GM13976 (cell line): ENCODE measurements at regions of chr10 and their contacts with region 1.

Region 1: DNA sequence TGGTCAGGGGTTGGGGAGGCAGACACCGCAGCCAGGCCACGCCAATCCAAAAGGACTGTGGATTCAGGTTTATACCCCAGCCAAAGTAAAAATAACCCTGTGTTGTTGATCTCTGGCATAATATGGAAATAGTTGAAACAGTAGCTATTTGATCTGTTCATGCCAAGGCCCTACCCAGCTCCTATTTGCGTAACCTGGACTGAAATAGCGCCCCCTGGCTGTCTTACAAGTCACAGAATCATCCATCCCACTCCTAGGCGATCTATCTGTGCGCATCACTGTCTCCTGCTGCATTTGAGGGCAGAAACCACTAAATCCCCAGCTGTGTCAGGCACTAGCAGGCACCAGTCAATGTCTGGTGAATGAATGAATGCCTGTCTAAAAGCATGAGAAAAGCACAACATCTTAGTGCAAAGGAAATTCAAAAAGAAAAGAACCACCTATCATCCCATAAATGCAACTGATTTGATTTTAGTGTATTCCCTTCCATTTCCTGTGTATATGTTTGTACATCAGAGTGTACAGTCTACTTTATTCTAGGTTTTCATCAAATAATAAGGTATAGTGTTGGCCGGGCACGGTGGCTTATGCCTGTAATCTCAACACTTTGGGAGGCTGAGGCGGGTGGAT is 160.0 kb downstream of the SLIT1 start:
- DNase-seq: peak; percentile 70
- CTCF ChIP-seq: peak; percentile 63

Region 2: DNA sequence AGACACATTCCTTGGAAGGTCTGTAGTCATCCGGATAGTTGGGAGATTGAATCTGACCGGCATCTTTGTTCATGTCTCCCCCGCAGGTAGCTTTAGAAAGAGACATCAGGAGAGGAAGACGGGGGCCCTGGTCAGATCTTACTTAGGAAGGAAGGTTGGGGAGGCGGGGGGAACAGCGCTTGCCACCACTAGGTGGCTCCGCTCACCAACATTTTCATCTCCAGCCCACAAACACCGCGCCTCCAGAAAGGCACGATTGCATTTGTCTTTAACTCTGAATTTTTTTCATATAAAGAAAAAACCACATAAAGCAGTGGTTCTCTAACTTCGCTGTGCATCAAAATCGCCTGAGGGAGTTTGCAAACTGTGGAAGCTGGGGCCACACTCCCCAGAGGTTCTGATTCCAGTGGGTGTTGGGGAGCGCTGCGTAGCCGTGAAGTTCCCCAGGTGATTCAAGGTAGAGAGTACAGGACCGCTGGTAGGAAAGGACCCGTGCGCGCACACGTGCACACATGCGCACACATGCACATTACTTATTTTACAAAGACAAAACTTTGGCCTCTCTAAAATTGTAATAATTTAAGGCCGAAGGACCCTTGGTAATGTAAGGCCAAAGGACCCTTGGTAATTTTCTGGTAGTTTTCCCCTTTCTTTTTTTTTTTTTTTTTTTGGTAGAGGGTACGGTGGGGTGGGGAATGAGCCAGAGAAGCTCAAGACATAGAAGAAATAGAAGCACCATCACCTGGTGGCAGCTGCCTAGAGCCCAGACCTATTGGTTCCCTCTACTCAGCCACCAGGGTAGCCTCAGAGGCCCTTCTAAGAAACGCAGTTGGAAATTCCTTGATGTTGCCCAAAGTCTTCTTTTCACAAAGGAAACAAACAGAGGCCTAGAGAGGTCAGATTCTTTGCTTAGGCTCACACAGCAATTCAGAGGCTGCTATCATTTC is 629.5 kb before region 1 on chr10:
- in situ Hi-C with region 1: loop called (anchors 10 kb)
- DNase-seq: peak; percentile 87
- CTCF ChIP-seq: peak; percentile 80

Region 3: GRCh38 chr10:96765406-96766240 is 260.1 kb before region 1 on chr10:
- in situ Hi-C with region 1: no loop called
- DNase-seq: peak; percentile 82
- CTCF ChIP-seq: peak; percentile 77